ENCODE measurements at regions of chr2 and their contacts with region 1.

Region 1: GRCh38 chr2:84925724-84926376 is 20.4 kb downstream of the TMSB10 start:
- DNase-seq: peak; percentile 87
- H3K4me3 ChIP-seq: peak overlapping the region in 1 of 3 experiments; percentile 1
- H3K27ac ChIP-seq: no peak overlapping the region
- H3K4me1 ChIP-seq: peaks cover 26% of the 10 kb centered on the region
- H3K27me3 ChIP-seq: no peaks in the 10 kb centered on the region
- CTCF ChIP-seq: peak; percentile 94 to 98
- POLR2A ChIP-seq: no peak

Region 2: GRCh38 chr2:84631047-84631446 is 294.8 kb before region 1 on chr2:
- CTCF ChIA-PET with region 1: no interaction called
- POLR2A ChIA-PET with region 1: no interaction called
- dilution Hi-C with region 1: no loop called
- intact Hi-C with region 1: loop called (anchors 5 kb)
- DNase-seq: peak; percentile 30
- H3K4me3 ChIP-seq: no peak overlapping the region
- H3K27ac ChIP-seq: no peak overlapping the region
- H3K4me1 ChIP-seq: no peaks in the 10 kb centered on the region
- H3K27me3 ChIP-seq: peaks cover 2 to 6% of the 10 kb centered on the region in 2 experiments
- CTCF ChIP-seq: peak; percentile 39 to 49
- POLR2A ChIP-seq: no peak

Region 3: GRCh38 chr2:84905181-84906107 is 20.4 kb before region 1 on chr2 and contains the start of gene TMSB10:
- CTCF ChIA-PET with region 1: interaction called, 61 read pairs
- POLR2A ChIA-PET with region 1: interaction called, 44 read pairs
- dilution Hi-C with region 1: no loop called
- intact Hi-C with region 1: loop called (anchors 1 kb)
- DNase-seq: peak; percentile 88
- H3K4me3 ChIP-seq: peak within 1 kb of the TSS; percentile 96 to 100 (median 99)
- H3K27ac ChIP-seq: peak within 1 kb of the TSS; percentile 91
- H3K4me1 ChIP-seq: peaks cover 7% of the 10 kb centered on the region
- H3K27me3 ChIP-seq: no peaks in the 10 kb centered on the region
- CTCF ChIP-seq: peak in 1 of 2 donors; percentile 15
- POLR2A ChIP-seq: peak; percentile 99
- total RNA-seq, gene TMSB10: 4,007 and 4,015 TPM in 2 replicates

Region 4: GRCh38 chr2:84958135-84959044 is 32.5 kb after region 1 on chr2:
- CTCF ChIA-PET with region 1: interaction called, 26 read pairs
- POLR2A ChIA-PET with region 1: interaction called, 4 read pairs
- dilution Hi-C with region 1: no loop called
- intact Hi-C with region 1: no loop called
- DNase-seq: peak; percentile 87
- H3K4me3 ChIP-seq: no peak overlapping the region
- H3K27ac ChIP-seq: peak overlapping the region; percentile 63
- H3K4me1 ChIP-seq: peaks cover 28% of the 10 kb centered on the region
- H3K27me3 ChIP-seq: no peaks in the 10 kb centered on the region
- CTCF ChIP-seq: no peak
- POLR2A ChIP-seq: no peak

Region 5: GRCh38 chr2:85017411-85018048 is 91.7 kb after region 1 on chr2:
- CTCF ChIA-PET with region 1: interaction called, 30 read pairs
- POLR2A ChIA-PET with region 1: no interaction called
- dilution Hi-C with region 1: no loop called
- intact Hi-C with region 1: loop called (anchors 1 kb)
- DNase-seq: peak; percentile 61
- H3K4me3 ChIP-seq: no peak overlapping the region
- H3K27ac ChIP-seq: peak overlapping the region; percentile 21
- H3K4me1 ChIP-seq: peaks cover 22% of the 10 kb centered on the region
- H3K27me3 ChIP-seq: no peaks in the 10 kb centered on the region
- CTCF ChIP-seq: no peak
- POLR2A ChIP-seq: no peak

Region 6: DNA sequence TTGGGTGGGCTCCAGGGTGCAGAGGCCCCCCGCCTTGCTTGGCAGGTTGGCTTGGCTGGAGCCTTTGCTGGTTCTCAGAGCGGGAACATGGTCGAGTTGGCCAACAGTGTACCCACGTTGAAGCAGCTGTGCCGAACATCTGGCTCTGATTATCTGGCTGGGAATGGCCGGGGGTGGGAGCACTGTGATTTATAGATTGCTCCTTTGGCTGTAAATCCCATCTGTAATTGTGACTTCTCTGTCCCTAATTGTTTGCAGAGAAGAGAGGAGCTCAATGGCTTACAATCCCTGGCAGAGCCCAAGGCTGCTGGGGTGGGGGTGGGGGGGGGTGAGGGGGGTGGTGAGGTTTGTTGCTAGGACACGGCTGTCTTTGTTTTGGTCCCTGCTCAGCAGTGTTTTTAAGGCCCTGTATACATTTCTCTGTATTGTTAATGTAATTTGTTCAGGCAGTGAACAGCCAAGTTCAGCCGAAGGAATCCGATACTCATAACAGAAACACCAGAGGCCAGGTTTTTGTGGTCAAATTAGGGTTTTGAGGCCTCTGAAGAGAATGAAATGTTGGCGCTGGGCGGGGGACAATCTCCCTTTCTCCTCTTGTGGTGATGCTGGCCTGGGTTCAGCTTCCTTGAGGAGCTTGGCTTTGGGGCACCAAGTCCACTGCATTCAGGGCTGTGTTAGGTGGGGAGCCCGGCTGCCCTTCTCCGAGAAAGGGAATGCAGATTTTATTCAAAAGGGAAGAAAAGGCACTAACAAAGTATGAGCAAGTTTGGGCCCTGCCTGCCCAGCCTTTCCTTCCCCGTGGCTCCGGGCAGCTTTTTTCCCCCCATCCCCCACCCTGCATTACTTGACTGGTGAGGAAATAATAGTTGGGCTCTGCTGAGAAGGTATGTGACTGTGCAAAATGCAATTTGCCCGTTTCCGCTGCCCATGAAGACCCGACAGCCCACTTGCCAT is 289.9 kb after region 1 on chr2:
- CTCF ChIA-PET with region 1: no interaction called
- POLR2A ChIA-PET with region 1: no interaction called
- dilution Hi-C with region 1: no loop called
- intact Hi-C with region 1: no loop called
- DNase-seq: no peak
- H3K4me3 ChIP-seq: no peak overlapping the region
- H3K27ac ChIP-seq: no peak overlapping the region
- H3K4me1 ChIP-seq: no peaks in the 10 kb centered on the region
- H3K27me3 ChIP-seq: no peaks in the 10 kb centered on the region
- CTCF ChIP-seq: no peak
- POLR2A ChIP-seq: no peak

Region 7: GRCh38 chr2:85302121-85302520 is 376.3 kb after region 1 on chr2:
- CTCF ChIA-PET with region 1: interaction called, 21 read pairs
- POLR2A ChIA-PET with region 1: no interaction called
- dilution Hi-C with region 1: no loop called
- intact Hi-C with region 1: loop called (anchors 2 kb)
- DNase-seq: no peak
- H3K4me3 ChIP-seq: no peak overlapping the region
- H3K27ac ChIP-seq: no peak overlapping the region
- H3K4me1 ChIP-seq: no peaks in the 10 kb centered on the region
- H3K27me3 ChIP-seq: no peaks in the 10 kb centered on the region
- CTCF ChIP-seq: no peak
- POLR2A ChIP-seq: no peak